H1 (cell line): ENCODE measurements at regions of chr2 and their contacts with region 1.

Region 1: DNA sequence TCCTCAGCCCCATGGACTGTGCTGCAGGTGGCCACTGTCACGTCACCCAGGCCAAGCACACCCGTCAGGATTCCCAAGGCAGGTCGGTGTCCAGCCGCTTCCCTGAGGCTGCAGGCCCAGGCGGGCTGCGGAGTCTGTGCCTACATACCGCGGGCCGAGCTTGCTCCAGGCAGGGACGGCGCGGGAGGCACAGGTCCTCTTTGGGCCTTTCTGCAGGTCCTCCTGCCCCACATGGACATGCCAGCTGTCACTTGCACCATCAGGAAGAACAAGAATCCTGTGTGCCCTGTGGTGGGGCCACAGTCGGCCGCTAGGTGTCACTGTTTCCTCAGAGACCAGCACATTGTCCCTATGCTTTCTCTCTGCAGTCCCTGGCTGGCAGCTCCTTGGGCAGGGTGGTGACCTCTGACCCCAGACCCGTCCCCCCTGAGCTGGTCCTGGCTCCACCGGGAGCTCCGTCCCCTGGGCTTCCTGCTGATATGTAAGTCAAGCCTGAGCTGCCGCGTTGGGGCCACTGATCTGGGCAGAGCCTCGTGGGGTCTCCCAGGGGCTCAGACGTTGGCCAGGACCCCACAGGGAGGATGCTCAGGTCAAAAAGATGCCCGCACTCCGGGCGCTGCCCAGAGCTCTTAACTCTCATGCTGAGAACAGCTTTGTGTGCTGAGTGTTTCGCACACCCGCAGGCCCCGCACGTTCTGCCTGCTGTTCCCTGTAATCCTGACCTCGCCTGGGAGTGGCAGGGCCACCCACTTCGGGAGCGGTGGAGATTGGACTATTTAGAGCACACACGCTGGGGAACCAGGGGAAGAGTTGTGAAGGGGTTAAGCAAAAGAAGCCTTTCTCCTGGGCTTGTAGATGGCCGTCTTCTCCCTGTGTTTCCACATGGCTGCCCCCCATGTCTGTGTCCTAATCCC is 17.3 kb upstream of the AGXT start:
- DNase-seq: peak; percentile 78 to 98
- H3K4me3 ChIP-seq: no peak overlapping the region
- H3K27ac ChIP-seq: no peak overlapping the region
- H3K4me1 ChIP-seq: peaks cover 0 to 4% (median under 1%) of the 10 kb centered on the region in 4 experiments; a peak in 2 of 7 replicates
- H3K27me3 ChIP-seq: no peaks in the 10 kb centered on the region
- CTCF ChIP-seq: peak in 2 of 3 experiments; percentile 92 to 99; a peak in 3 of 4 replicates
- EP300 ChIP-seq: no peak
- POLR2A ChIP-seq: no peak
- RAD21 ChIP-seq: peak; percentile 98

Region 2: GRCh38 chr2:240840435-240841080 is 10.8 kb before region 1 on chr2:
- CTCF ChIA-PET with region 1: interaction called, 18 read pairs
- POLR2A ChIA-PET with region 1: no interaction called
- DNase-seq: peak; percentile 46 to 62
- H3K4me3 ChIP-seq: no peak overlapping the region
- H3K27ac ChIP-seq: no peak overlapping the region
- H3K4me1 ChIP-seq: peaks cover 0 to 4% (median 0%) of the 10 kb centered on the region in 4 experiments; a peak in 1 of 7 replicates
- H3K27me3 ChIP-seq: no peaks in the 10 kb centered on the region
- CTCF ChIP-seq: peak; percentile 23 to 74 (median 58)
- EP300 ChIP-seq: no peak
- POLR2A ChIP-seq: no peak
- RAD21 ChIP-seq: peak; percentile 55 to 73

Region 3: DNA sequence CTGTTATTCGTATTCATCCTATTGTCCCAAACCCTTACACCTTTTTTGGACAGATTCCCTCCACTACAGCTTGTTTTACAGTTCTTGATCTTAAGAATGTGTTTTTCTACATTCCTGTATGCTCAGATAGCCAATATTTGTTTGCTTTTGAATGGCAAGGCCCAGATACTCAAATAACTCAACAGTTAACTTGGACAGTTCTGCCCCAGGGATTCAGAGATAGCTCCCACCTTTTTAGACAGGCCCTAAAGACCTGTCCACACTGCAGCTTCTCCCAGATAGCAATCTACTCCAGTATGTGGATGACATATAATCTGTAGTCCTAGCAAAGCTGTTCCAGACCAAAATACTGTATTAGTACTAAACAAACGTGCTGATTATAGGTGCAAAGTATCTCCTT is 10.2 kb after region 1 on chr2:
- CTCF ChIA-PET with region 1: interaction called, 20 read pairs
- POLR2A ChIA-PET with region 1: no interaction called
- DNase-seq: no peak
- H3K4me3 ChIP-seq: no peak overlapping the region
- H3K27ac ChIP-seq: no peak overlapping the region
- H3K4me1 ChIP-seq: no peaks in the 10 kb centered on the region
- H3K27me3 ChIP-seq: no peaks in the 10 kb centered on the region
- CTCF ChIP-seq: no peak
- EP300 ChIP-seq: no peak
- POLR2A ChIP-seq: no peak
- RAD21 ChIP-seq: no peak

Region 4: DNA sequence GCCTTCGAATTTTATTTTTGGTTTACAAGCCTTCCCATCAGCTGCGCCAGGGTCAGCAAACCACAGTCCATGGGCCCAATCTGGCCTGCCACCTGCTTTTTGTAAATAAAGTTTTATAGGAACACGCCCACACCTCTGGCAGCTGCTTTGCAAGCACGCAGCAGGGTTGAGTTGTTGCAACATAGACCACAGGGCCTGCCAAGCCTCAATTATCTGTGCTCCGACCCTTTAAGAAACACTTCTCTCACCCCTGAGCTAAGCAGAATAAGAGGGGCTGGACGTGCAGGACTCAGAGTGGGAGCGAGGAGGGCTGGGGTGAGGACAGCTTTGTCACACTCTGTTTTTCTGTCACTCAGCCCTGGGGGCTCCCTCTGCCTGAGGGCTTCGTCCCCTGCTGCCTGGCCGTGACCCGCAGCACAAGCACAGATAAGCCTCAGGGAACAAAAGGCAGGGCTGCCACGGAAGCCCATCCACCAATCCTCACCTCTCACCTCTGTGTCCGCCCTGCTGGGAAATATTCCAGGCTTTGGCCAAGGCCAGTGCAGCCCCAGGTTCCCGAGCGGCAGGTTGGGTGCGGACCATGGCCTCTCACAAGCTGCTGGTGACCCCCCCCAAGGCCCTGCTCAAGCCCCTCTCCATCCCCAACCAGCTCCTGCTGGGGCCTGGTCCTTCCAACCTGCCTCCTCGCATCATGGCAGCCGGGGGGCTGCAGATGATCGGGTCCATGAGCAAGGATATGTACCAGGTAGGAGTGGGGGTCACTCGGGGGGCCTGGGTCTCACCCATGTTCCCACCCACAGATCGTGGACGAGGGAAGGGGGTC is 17.2 kb after region 1 on chr2 and contains the start of gene AGXT:
- CTCF ChIA-PET with region 1: interaction called, 13 read pairs
- POLR2A ChIA-PET with region 1: no interaction called
- DNase-seq: no peak
- H3K4me3 ChIP-seq: no peak within 1 kb of the TSS
- H3K27ac ChIP-seq: no peak within 1 kb of the TSS
- H3K4me1 ChIP-seq: no peaks in the 10 kb centered on the region
- H3K27me3 ChIP-seq: no peaks in the 10 kb centered on the region
- CTCF ChIP-seq: no peak
- EP300 ChIP-seq: no peak
- POLR2A ChIP-seq: no peak
- RAD21 ChIP-seq: no peak
- total RNA-seq, gene AGXT: not detected in 2 replicates

Region 5: DNA sequence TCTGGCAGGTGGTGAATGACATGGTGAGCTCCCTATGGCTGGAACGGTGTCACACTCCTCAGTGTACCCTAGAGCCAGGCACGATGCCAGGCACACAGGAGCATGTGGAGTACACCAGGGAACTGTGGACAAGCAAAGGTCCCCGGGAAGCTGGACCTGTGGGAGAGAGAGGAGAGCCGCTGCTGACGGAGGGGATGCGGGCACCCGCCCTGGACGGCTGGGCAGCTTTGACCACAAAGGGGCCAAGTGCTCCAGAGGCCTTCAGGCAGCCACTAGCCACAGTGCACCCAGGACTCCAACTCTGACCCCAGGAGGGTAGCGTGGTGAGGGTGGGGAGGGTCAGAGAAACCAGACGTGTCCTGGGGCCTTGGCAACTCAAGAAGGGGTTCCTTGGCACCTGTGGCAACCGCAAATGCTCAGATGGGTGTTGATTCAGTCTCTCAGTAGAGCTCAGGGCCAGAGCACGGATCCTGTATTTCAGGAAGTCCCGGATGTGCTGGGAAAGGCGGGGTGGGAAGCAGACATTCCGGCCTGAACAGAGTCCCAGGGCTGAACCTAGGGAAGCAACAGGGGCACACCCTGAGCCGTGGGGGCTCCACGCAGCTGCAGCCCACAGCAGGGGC is 46.9 kb after region 1 on chr2:
- CTCF ChIA-PET with region 1: interaction called, 20 read pairs
- POLR2A ChIA-PET with region 1: no interaction called
- DNase-seq: no peak
- H3K4me3 ChIP-seq: no peak overlapping the region
- H3K27ac ChIP-seq: no peak overlapping the region
- H3K4me1 ChIP-seq: 0 out of 7 replicates have a peak, but pooled peaks cover 0 to 2% (median 0%) of the 10 kb centered on the region in 4 experiments
- H3K27me3 ChIP-seq: no peaks in the 10 kb centered on the region
- CTCF ChIP-seq: no peak
- EP300 ChIP-seq: no peak
- POLR2A ChIP-seq: no peak
- RAD21 ChIP-seq: no peak

Region 6: DNA sequence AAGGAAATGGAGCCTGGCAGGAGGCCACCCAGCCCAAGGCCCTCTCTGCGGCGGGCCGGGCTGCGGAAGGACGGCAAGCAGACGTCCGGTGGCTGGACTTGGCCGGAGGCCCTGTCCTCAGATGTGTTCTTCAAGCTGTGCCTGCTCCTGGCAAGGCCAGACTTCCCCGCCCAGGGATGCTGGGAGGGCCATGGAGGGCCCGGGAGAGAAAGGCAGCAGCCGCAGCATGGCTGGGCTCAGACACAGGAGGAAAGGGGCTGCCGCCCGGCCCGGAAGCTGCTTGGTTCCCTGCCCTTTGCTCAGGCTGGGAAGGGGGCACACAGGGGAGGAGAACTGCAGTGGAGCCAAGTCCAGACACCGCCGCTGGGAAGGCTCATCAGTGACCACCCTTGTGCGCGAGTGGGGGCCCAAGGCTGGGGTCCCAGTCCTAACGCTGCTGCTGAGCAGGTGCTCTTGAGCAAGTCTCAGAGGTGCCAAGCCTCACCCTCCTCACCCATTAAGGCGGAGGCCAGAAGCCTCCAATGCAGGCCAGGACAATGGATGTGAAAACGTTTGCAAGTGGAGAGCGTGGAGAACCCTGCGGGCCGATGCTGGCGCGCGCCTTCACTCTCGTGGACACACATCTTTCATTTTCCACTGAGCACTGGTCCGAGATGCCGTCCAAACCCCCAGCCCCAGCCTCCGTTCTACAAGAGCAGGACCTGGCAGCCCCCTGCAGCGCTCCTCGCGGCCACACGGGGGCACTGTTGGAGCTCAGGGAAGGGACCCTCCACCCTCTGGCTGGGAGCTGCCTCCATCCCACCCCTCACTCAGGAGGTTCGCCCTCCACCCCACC is 62.7 kb after region 1 on chr2:
- CTCF ChIA-PET with region 1: interaction called, 20 read pairs
- POLR2A ChIA-PET with region 1: no interaction called
- DNase-seq: peak; percentile 34 to 99
- H3K4me3 ChIP-seq: no peak overlapping the region
- H3K27ac ChIP-seq: no peak overlapping the region
- H3K4me1 ChIP-seq: peaks cover 0 to 6% (median 3%) of the 10 kb centered on the region in 4 experiments; a peak in 4 of 7 replicates
- H3K27me3 ChIP-seq: peaks cover 1 to 9% (median 9%) of the 10 kb centered on the region in 4 experiments; a peak in 6 of 7 replicates
- CTCF ChIP-seq: peak in 2 of 3 experiments; percentile 88 to 94; a peak in 3 of 4 replicates
- EP300 ChIP-seq: no peak
- POLR2A ChIP-seq: no peak
- RAD21 ChIP-seq: peak; percentile 87 to 90

Region 7: DNA sequence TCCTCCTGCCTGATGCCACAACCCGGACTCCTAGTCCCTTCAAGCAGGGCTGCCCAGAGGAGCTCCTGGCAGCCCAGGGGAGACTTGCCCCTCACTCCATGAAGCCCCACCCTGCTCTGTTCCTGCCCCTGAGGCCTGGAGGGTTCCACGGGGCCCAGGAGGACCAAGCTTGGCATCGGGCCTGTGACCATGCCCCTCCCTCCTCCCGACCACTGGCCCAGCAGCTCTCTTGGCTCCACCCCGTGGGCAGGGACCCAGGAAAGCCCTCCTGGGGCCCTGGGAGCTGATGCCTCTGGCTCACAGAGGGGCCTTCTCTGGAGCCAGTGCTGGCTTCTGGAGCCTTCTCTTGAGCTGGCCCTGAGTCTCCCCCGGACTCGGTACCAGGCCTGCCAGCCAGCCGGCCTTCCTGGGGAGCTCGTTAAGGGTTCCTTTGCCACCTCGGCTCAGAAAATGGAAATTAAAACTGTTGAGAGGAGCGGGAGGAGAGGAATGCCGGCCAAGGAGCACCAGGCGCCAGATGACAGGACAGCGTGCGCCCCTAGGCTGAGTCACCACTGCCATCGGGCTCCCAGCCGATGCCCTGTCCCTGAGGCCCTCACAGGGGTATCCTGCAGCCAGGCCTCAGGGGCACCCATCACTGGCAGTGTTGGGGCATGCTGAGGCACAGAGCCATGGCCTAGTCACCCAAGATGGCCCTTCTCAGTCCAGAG is 106.5 kb after region 1 on chr2:
- CTCF ChIA-PET with region 1: no interaction called
- POLR2A ChIA-PET with region 1: no interaction called
- DNase-seq: no peak
- H3K4me3 ChIP-seq: no peak overlapping the region
- H3K27ac ChIP-seq: no peak overlapping the region
- H3K4me1 ChIP-seq: peaks cover 0 to 17% (median 8%) of the 10 kb centered on the region in 4 experiments; a peak in 5 of 7 replicates
- H3K27me3 ChIP-seq: no peaks in the 10 kb centered on the region
- CTCF ChIP-seq: no peak
- EP300 ChIP-seq: no peak
- POLR2A ChIP-seq: no peak
- RAD21 ChIP-seq: no peak

Region 8: DNA sequence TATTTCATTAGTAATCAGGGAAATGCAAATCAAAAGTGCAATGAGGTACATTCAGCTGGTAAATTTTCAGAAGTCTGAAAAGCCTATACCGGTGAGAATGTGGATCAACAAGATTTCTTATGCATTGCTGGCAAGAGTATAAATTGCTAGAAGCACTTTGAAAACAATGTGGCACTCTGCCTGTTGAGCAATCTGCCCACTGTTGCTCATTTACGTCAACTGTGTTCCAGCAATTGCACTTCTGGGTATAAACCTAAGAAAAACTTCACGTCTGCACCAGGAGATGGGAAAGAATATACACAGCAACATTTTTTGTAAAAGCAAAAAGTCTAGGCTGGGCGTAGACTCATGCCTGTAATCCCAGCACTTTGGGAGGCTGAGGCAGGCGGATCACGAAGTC is 209.9 kb after region 1 on chr2:
- CTCF ChIA-PET with region 1: no interaction called
- POLR2A ChIA-PET with region 1: no interaction called
- DNase-seq: no peak
- H3K4me3 ChIP-seq: no peak overlapping the region
- H3K27ac ChIP-seq: no peak overlapping the region
- H3K4me1 ChIP-seq: peaks cover 0 to 9% (median 2%) of the 10 kb centered on the region in 4 experiments; a peak in 3 of 7 replicates
- H3K27me3 ChIP-seq: no peaks in the 10 kb centered on the region
- CTCF ChIP-seq: no peak
- EP300 ChIP-seq: no peak
- POLR2A ChIP-seq: no peak
- RAD21 ChIP-seq: no peak

Region 9: GRCh38 chr2:241081643-241082340 is 230.5 kb after region 1 on chr2:
- CTCF ChIA-PET with region 1: interaction called, 13 read pairs
- POLR2A ChIA-PET with region 1: no interaction called
- DNase-seq: no peak
- H3K4me3 ChIP-seq: no peak overlapping the region
- H3K27ac ChIP-seq: no peak overlapping the region
- H3K4me1 ChIP-seq: no peaks in the 10 kb centered on the region
- H3K27me3 ChIP-seq: no peaks in the 10 kb centered on the region
- CTCF ChIP-seq: no peak
- EP300 ChIP-seq: no peak
- POLR2A ChIP-seq: no peak
- RAD21 ChIP-seq: no peak